Right ventricle myocardium inferior (tissue), 1 donor: ENCODE measurements at regions of chr15 and their contacts with region 1.

Region 1: GRCh38 chr15:44728576-44729407 is 7.5 kb upstream of the TRIM69 start:
- DNase-seq: peak; percentile 97
- ATAC-seq: peak; percentile 97

Region 2: GRCh38 chr15:44711356-44712107 is 17.3 kb before region 1 on chr15 and contains the start of gene B2M:
- intact Hi-C with region 1: loop called (anchors 1 kb)
- DNase-seq: peak; percentile 98
- ATAC-seq: peak; percentile 96
- total RNA-seq, gene B2M: 1,155 TPM